ENCODE measurements at regions of chr1 and their contacts with region 1.

Region 1: DNA sequence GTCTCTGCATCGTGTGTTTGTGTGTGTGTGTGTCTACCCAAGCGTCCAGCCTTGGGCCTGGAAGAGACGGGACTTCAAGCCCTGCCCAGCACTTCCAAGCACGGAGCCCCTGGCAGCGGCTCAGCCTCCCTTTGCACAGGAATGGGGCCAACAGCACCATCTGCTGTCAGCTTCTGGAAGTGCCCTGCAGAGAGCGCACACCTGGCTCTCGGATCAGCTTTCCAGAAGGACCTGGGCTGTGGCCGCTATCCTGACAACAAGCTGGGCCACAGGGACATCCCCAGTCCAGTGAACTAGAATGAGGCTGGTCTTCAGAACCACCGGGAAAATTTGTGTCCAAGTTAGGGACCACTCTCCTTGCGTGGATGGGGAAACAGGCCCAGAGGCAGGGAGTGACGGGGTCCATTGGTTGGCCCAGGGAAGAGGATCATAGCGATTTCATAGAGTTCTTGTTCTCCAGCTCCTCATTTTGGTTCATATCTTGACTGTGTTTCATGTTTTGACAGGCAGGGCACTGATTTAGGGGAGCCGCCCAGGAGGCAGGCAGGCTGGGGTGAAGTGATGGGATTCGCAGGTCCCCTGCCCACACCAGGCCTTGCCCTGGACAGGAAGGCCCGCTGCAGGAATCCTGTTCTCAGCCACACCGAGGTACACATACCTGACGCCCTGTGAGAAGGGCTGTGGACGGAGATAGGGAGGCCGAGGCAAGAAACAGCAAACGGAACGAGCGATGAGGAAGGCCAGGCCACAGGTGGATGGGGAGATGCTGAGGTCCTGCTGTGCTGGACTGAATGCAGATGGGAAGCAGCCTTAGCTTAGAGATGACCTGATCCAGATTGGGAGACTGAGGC is 38.4 kb downstream of the TAS1R2 start:
- DNase-seq: peak; percentile 83
- CTCF ChIP-seq: peak; percentile 94

Region 2: DNA sequence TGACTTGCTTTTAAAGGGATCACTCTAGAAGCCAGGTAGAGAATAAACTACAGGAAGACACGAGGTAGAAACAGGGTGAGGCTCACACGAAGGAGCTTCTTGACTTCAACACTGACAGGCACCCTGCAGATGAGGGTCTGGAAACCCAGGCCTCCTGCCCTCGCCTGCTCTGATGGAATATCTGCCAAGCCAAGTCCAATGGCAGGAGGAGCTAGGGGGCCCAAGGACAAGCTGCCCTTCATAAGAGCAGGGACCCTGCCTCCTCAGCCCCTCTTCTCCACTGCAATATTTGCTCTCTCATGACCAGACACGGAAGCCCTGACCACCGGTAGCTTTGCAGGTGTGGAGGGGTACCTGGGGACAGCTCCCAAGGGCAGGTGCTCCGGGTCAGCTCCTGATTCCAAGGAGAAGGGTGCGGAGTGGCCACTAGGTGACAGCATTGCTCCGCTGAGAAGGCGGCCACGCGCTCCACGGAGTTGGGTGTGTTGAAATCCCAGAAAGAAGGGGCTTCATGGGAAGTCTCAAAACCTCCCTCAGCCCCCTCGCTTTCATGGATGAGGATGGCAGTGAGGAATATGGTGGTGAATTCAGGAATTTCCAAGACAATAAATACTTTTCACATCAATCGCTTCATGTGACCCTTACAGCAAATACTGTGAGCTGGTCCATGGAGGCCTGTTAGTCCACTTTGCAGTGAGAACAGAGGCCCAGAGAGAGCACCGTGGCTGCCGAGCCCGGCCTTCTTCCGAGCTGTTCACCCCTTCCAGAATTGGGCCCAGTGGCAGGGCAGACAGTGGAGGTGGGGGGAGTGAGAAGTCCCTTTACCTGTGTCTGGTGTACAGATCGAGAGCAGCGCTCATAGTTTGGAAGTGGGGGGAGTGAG is 223.6 kb before region 1 on chr1:
- in situ Hi-C with region 1: loop called (anchors 10 kb)
- DNase-seq: peak; percentile 64
- CTCF ChIP-seq: peak; percentile 90

Region 3: DNA sequence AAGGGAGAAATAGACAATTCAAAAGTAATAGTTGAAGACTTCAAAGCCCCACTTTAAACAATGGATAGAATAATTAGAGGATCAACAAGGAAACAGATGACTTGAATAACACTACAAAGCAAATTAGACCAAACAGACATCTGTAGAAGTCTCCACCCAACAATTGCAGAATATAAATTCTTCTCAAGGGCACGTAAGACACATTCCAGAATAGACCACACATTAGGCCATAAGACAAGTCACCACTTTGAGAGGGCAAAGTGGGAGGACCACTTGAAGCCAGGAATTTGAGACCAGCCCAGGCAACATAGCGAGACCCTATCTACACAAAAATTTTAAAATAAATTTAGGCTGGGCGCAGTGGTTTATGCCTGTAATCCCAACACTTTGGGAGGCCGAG is 1014.6 kb after region 1 on chr1:
- in situ Hi-C with region 1: no loop called
- DNase-seq: no peak
- CTCF ChIP-seq: no peak